ENCODE measurements at regions of chr5 and their contacts with region 1.

Region 1: DNA sequence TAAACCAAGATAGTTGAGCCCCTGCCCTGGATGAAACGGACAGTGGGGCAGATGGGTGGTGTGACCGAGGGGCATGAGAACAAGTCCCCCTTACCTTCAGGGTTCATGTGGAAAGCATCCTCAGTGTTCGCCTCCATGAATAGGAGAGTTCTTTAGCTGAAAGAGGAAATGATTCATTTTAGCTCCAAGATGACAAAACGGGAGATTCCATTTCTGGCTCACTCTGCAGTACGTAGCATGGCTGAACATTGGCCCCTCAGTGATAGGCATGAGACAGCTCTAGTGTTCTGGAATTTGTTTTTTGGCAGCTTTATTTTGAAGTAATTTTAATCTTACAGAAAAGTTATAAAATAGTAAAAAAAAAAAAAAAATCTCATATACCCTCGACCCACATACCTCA is 70.2 kb upstream of the AGXT2 start:
- DNase-seq: peak; percentile 89
- ATAC-seq: peak; percentile 68
- H3K4me3 ChIP-seq: no peak overlapping the region
- H3K27ac ChIP-seq: peak overlapping the region; percentile 30; the same call in 1 of the 2 replicates
- H3K4me1 ChIP-seq: peaks cover 12% of the 10 kb centered on the region
- H3K27me3 ChIP-seq: no peaks in the 10 kb centered on the region
- CTCF ChIP-seq: no peak
- POLR2A ChIP-seq: no peak
- RAD21 ChIP-seq: no peak

Region 2: DNA sequence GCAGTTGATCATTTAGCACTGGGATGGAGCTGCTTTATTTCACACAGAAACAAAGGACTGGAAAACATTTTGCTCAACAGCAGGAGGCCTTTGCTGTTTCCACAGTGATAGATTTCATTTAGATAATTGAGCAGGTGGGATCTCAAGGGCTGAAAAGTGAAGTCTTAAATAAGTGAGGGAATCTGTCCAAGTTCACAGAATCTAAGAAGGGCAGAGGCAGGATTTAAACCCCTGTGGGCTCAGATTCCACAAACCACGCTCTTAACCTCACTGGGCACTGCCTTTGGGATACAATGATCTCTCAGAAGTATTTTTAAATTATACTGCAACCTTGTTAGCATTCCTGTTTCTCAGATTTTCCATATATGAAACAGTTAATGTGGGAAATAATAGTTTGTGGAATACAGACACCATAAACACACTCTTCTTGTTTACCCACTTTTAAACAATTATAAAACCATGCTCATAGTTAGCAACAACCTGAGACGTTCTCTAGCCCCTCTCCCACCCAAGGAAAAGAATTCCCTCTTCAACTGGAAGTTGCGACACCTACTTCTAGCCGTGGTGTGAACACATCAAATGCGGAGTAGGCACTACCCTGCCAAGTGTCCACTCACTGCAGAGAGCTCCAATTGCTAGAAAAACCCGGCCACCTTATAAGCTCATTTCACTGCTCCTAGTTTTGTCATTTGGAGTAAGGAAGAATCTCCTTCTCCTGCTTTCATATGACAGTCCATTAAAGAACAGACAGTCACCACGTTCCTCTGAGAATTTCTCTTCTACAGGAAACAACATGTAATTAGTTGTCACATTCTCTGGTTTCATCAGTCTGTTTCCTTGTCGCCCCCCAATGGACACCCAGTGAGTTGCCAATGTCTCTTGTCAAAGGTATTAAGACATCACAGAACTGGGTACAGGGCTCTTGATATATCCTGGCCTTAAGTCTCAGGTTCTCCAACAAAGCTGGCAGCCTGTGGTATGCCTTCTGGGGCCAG is 64.9 kb after region 1 on chr5:
- CTCF ChIA-PET with region 1: interaction called, 3 read pairs
- POLR2A ChIA-PET with region 1: no interaction called
- dilution Hi-C with region 1: no loop called
- in situ Hi-C with region 1: no loop called
- intact Hi-C with region 1: loop called (anchors 2 kb)
- DNase-seq: peak; percentile 60
- ATAC-seq: peak; percentile 81
- H3K4me3 ChIP-seq: no peak overlapping the region
- H3K27ac ChIP-seq: no peak overlapping the region
- H3K4me1 ChIP-seq: no peaks in the 10 kb centered on the region
- H3K27me3 ChIP-seq: peaks cover 20% of the 10 kb centered on the region
- CTCF ChIP-seq: peak; percentile 75
- POLR2A ChIP-seq: no peak
- RAD21 ChIP-seq: peak; percentile 80

Measured in IMR-90 (cell line).